Uterus (tissue), 4 donors: ENCODE measurements at regions of chr2 and their contacts with region 1.

Region 1: DNA sequence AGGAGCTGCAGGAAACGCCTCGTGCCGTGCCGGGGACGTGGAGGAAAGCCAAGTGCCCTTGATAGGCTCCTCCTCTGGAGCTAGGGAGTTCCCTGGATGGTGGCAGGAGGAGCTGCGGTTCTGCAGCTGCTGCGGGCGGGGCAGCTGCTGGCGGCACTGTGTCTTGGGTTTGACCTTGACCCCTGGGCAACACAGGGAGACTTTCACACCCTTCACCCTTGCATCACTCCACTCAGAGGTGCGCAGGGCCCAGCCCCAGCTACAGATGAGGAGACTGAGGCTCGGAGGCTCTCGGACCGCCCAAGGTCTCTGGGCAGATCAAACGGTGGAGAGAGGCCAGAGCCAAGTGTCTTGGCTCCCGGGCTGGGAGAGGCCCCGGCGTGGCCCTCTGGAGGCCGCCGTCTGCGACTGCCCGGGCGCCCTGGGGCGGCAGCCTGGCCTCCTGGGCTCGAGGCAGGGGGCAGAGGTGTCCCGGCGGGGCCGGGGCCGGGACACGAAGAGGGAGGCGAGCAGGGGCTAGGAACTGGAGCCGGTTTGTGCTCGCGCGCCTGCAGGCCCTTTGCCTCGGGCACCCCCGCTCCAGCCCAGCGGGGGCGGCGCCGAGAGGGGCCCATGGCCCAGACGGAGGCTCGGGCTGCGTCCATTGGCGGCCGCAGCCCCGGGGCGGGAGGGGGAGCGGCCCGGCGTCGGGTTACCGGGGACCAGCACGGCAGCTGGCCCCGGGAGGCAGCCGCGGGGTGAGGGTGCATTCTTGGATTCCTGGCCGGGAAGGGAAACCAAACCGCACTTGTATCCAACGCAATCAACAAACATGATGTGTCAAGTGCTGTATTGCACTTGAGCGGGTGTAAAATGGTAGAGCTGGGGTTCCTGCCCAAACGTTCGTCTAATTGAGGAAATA is 129.6 kb upstream of the SLC1A4 start:
- DNase-seq: peak; percentile 86 to 90
- H3K4me3 ChIP-seq: peak overlapping the region; percentile 17 to 48
- H3K27ac ChIP-seq: peak overlapping the region; percentile 87 to 96
- H3K4me1 ChIP-seq: peaks cover 9 to 17% of the 10 kb centered on the region in 2 donors
- H3K27me3 ChIP-seq: no peaks in the 10 kb centered on the region
- CTCF ChIP-seq: peak in 1 of 4 experiments; percentile 12
- POLR2A ChIP-seq: peak in 1 of 2 donors; percentile 34

Region 2: DNA sequence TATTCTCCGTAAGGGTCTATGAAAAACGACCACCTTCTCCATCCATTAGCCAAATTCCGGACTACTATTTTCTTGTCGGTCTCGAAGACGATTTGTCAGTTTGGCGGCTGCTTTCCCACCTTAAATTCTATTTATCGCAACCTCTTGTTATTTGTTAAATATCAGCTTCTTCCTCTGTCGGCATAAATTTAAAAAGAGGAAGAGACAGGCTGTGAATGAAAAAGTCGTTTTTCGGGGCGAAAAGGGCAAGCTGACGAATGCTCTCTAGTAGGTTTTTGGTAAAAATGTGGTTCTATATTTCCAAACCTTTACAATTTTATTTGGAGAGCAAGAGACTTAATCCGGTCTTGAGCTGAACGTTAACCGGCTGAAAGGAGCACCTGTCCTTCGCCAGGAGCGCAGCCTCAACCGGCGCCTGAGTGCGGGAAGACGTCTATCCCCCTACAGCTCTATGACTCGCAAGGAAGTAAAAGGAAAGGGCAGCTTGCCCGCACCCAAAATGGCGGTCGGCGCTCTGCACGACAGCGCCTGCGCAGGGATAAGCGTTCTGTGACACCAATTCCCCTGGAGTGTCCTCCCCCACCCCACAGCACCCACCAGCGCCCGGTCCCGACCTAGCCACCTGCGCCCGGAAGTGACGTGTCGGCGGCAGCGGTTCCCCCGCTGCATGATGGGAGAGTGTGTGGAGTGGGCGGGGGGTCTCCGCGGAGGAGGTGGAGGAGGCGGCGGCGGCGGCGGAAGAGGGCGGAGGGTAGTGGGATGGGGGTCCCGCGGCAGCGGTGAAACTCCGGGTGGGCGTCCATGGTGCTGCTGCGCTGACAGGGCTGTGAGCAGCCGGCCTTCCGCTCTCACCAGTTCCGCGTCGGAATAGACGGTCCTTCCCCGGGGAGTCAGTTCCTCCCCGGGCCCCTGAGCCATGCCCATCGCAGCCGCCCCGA is 335.6 kb before region 1 on chr2 and contains the start of gene AFTPH:
- intact Hi-C with region 1: loop called (anchors 5 kb)
- DNase-seq: peak; percentile 99
- H3K4me3 ChIP-seq: peak within 1 kb of the TSS; percentile 84 to 97
- H3K27ac ChIP-seq: peak within 1 kb of the TSS; percentile 92 to 94
- H3K4me1 ChIP-seq: no peaks in the 10 kb centered on the region
- H3K27me3 ChIP-seq: no peaks in the 10 kb centered on the region
- CTCF ChIP-seq: peak in 1 of 4 experiments; percentile 27
- POLR2A ChIP-seq: peak; percentile 79 to 96
- total RNA-seq, gene AFTPH: 24.1 to 62.4 (median 37.4) TPM

Region 3: DNA sequence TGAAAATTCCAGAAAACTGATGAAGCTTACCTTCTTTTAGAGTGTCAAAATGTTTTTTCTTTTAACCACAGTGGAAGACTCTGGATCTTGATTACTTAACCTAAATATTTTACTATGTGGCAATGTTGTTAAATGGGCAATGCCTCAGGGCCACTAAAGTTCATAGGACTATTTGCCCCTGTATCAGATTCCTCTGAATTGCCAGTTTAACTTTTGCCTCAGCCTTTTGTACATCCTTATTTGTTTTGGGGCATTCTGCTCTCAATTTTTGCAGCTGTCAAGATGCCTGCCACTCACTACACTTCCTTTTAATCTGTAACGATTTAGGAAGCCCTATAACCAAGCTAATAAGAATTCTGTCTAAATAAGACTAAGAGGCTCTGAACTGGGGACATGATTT is 174.1 kb before region 1 on chr2:
- intact Hi-C with region 1: no loop called
- DNase-seq: no peak
- H3K4me3 ChIP-seq: no peak overlapping the region
- H3K27ac ChIP-seq: no peak overlapping the region
- H3K4me1 ChIP-seq: no peaks in the 10 kb centered on the region
- H3K27me3 ChIP-seq: no peaks in the 10 kb centered on the region
- CTCF ChIP-seq: no peak
- POLR2A ChIP-seq: no peak

Region 4: DNA sequence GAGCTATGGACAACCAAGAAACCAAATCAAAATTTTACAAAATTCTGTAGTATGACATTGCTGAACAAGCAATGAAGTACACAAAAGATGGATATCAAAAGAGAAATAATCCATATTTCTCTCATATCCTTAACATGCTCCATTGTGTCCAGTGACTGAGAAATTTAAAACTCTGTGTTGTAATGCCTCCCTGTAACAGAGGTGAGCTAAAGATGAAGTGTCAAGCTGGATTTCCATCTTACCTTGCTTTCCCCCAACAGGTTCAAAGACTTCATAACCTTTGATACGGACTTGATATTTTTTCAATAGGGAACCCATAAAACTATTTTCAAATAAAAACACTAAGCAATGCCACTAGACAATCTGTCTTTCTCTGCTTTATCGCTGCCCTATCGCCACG is 110.1 kb before region 1 on chr2:
- intact Hi-C with region 1: no loop called
- DNase-seq: no peak
- H3K4me3 ChIP-seq: peak overlapping the region; percentile 85 to 89
- H3K27ac ChIP-seq: peak overlapping the region; percentile 99 to 100
- H3K4me1 ChIP-seq: no peaks in the 10 kb centered on the region
- H3K27me3 ChIP-seq: no peaks in the 10 kb centered on the region
- CTCF ChIP-seq: no peak
- POLR2A ChIP-seq: no peak